ENCODE measurements at regions of chr1 and their contacts with region 1.

Region 1: DNA sequence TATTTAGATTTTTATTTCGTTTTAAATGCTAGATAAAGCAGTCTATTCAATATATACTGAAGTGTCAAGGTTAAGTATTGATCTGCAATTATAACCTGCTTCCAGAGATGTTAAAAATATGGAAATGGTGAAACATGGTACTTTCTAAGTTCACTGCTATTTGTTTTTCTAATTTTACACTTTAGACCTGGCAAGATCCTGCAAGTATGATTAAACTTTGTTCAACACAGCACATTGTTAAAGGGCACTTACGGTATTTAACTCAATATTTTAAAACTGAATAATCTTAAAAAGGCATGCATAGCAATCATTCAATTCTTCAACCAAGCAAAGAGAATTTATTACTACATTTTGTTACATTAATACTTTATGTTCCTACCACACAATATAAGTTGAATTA is 35.7 kb upstream of the ZZZ3 start:
- DNase-seq: no peak
- ATAC-seq: no peak

Region 2: DNA sequence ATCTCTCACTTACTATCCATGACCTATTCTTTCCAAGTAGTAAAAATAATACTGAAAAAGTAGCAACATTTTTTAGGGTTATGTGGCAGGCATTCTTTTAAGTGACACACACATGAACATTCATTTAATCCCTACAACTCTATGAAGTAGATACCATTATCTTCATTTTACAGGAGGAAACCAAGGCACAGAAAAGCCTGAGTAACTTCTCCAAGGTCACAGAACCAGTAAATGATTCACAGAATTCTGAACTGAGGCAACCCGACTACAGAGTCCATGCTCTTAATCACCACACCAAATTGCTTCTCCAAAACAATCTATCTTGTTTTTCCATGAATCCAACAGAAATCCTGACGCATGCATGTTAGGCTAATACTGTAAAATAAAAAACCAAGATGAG is 243.2 kb after region 1 on chr1:
- intact Hi-C with region 1: loop called (anchors 5 kb)
- DNase-seq: no peak
- ATAC-seq: no peak